Activated B cell treated with CpG ODN at 0.5 μM for 24 hours (primary cell): ENCODE measurements at regions of chr19 and their contacts with region 1.

Region 1: GRCh38 chr19:54463531-54464043 is at the start of gene LENG9:
- DNase-seq: peak; percentile 85
- ATAC-seq: peak; percentile 61
- H3K4me3 Mint-ChIP-seq: peak within 1 kb of the TSS; percentile 82
- H3K27ac Mint-ChIP-seq: peak within 1 kb of the TSS; percentile 90
- H3K4me1 Mint-ChIP-seq: peaks cover 28% of the 10 kb centered on the region
- H3K27me3 Mint-ChIP-seq: no peaks in the 10 kb centered on the region
- CTCF ChIP-seq: no peak
- total RNA-seq, gene LENG9: 6.3 and 8.5 TPM in 2 replicates

Region 2: GRCh38 chr19:53867225-53868090 is 596.1 kb before region 1 on chr19 and contains the start of gene MYADM:
- CTCF ChIA-PET with region 1: no interaction called
- POLR2A ChIA-PET with region 1: interaction called, 4 read pairs
- intact Hi-C with region 1: loop called (anchors 1 kb)
- DNase-seq: peak; percentile 99
- ATAC-seq: peak; percentile 65
- H3K4me3 Mint-ChIP-seq: peak within 1 kb of the TSS; percentile 91
- H3K27ac Mint-ChIP-seq: peak within 1 kb of the TSS; percentile 93
- H3K4me1 Mint-ChIP-seq: peaks cover 44% of the 10 kb centered on the region
- H3K27me3 Mint-ChIP-seq: no peaks in the 10 kb centered on the region
- CTCF ChIP-seq: no peak
- total RNA-seq, gene MYADM: 10.9 and 12.9 TPM in 2 replicates

Region 3: DNA sequence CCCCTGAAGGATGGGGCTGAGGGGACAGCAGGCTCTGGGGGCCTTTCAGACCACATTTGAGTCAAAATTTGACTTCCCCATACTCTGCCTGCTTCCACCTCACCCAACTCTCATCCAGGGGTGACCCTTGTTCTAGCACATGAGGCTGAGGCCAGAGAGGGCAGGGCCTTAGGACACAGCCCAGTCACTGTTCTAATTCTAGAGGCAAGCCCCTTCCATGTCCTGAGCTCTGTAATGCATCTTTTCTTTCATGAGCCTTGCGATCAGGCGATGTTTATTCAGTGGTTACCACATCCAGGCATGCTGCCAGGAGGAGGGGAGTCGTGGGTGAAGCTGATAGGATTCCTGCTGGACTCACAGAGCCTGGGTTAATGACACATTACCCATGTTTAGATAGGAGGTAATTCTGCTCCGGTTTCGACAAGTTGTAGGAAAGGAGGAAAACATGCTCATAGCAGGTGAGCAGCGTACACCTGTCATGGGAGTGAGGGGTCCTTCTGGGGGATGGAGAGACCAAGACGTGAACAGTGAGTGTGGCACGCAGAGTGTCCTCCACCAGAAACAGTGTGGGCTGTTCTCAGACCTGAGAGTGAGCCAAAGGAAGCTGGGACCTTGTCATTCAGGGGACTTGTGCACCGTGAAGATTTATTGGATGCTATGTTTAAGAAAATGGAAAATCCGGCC is 253.6 kb before region 1 on chr19:
- CTCF ChIA-PET with region 1: no interaction called
- POLR2A ChIA-PET with region 1: no interaction called
- intact Hi-C with region 1: no loop called
- DNase-seq: no peak
- ATAC-seq: no peak
- H3K4me3 Mint-ChIP-seq: peak overlapping the region; percentile 6
- H3K27ac Mint-ChIP-seq: peak overlapping the region; percentile 10
- H3K4me1 Mint-ChIP-seq: peaks cover 60% of the 10 kb centered on the region
- H3K27me3 Mint-ChIP-seq: no peaks in the 10 kb centered on the region
- CTCF ChIP-seq: no peak

Region 4: DNA sequence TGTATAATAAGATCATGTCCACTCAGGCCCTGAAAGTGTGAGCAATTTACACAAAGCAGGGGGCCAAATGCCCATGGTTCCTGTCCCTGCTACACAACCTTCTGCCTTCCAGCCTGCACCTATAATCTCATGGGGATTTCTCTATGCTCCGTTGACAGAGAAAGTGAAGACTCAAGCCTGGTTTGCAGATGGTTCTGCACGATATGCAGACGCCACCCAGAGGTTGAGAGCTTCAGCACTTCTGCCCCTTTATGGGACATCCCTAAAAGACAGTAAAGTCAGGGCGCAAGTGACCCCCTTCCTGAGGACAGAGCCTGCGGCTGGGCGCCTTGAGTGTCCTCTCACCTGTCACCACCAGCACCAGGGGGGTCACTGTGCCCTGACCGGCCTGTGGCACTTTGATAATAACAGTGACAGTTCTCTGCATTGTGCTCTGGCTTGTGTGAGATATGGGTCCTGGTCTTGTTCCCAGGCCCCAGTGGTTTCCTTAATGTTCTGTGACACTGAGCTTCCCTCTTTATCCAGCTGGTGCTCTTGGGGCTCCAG is 165.8 kb before region 1 on chr19:
- CTCF ChIA-PET with region 1: no interaction called
- POLR2A ChIA-PET with region 1: no interaction called
- intact Hi-C with region 1: no loop called
- DNase-seq: no peak
- ATAC-seq: peak; percentile 68
- H3K4me3 Mint-ChIP-seq: no peak overlapping the region
- H3K27ac Mint-ChIP-seq: no peak overlapping the region
- H3K4me1 Mint-ChIP-seq: peaks cover 11% of the 10 kb centered on the region
- H3K27me3 Mint-ChIP-seq: peaks cover 46% of the 10 kb centered on the region
- CTCF ChIP-seq: no peak

Region 5: GRCh38 chr19:54420383-54421168 is 43.0 kb before region 1 on chr19:
- CTCF ChIA-PET with region 1: no interaction called
- POLR2A ChIA-PET with region 1: no interaction called
- intact Hi-C with region 1: no loop called
- DNase-seq: no peak
- ATAC-seq: no peak
- H3K4me3 Mint-ChIP-seq: no peak overlapping the region
- H3K27ac Mint-ChIP-seq: no peak overlapping the region
- H3K4me1 Mint-ChIP-seq: peaks cover 11% of the 10 kb centered on the region
- H3K27me3 Mint-ChIP-seq: peaks cover 36% of the 10 kb centered on the region
- CTCF ChIP-seq: no peak

Region 6: DNA sequence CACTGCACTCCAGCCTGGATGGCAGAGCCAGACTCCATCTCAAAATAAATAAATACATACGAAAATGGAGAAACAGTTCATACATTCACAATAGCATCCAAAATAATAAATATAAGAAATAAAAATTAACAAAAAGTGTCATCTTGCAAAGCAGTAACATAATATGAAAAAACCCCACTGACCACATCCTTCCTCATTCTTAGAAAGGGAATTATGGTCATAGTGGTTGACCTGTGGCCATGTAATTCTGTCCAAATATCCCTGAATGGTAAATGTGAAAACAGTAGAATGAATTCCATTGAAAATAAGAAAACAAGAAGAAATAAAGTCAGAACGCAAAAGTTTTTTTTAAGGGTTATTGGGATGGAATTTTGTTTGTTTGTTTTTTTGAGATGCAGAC is 16.5 kb after region 1 on chr19:
- CTCF ChIA-PET with region 1: no interaction called
- POLR2A ChIA-PET with region 1: no interaction called
- intact Hi-C with region 1: no loop called
- DNase-seq: no peak
- ATAC-seq: no peak
- H3K4me3 Mint-ChIP-seq: no peak overlapping the region
- H3K27ac Mint-ChIP-seq: no peak overlapping the region
- H3K4me1 Mint-ChIP-seq: peaks cover 17% of the 10 kb centered on the region
- H3K27me3 Mint-ChIP-seq: peaks cover 28% of the 10 kb centered on the region
- CTCF ChIP-seq: no peak

Region 7: GRCh38 chr19:54616821-54617560 is 153.4 kb after region 1 on chr19:
- CTCF ChIA-PET with region 1: no interaction called
- POLR2A ChIA-PET with region 1: interaction called, 11 read pairs
- intact Hi-C with region 1: loop called (anchors 5 kb)
- DNase-seq: no peak
- ATAC-seq: peak; percentile 84
- H3K4me3 Mint-ChIP-seq: peak overlapping the region; percentile 99
- H3K27ac Mint-ChIP-seq: peak overlapping the region; percentile 99
- H3K4me1 Mint-ChIP-seq: peaks cover 80% of the 10 kb centered on the region
- H3K27me3 Mint-ChIP-seq: no peaks in the 10 kb centered on the region
- CTCF ChIP-seq: no peak

Region 8: GRCh38 chr19:54959840-54960239 is 496.3 kb after region 1 on chr19:
- CTCF ChIA-PET with region 1: no interaction called
- POLR2A ChIA-PET with region 1: no interaction called
- intact Hi-C with region 1: loop called (anchors 1 kb)
- DNase-seq: no peak
- ATAC-seq: peak; percentile 76
- H3K4me3 Mint-ChIP-seq: peak overlapping the region; percentile 74
- H3K27ac Mint-ChIP-seq: peak overlapping the region; percentile 82
- H3K4me1 Mint-ChIP-seq: peaks cover 25% of the 10 kb centered on the region
- H3K27me3 Mint-ChIP-seq: no peaks in the 10 kb centered on the region
- CTCF ChIP-seq: no peak

Region 9: DNA sequence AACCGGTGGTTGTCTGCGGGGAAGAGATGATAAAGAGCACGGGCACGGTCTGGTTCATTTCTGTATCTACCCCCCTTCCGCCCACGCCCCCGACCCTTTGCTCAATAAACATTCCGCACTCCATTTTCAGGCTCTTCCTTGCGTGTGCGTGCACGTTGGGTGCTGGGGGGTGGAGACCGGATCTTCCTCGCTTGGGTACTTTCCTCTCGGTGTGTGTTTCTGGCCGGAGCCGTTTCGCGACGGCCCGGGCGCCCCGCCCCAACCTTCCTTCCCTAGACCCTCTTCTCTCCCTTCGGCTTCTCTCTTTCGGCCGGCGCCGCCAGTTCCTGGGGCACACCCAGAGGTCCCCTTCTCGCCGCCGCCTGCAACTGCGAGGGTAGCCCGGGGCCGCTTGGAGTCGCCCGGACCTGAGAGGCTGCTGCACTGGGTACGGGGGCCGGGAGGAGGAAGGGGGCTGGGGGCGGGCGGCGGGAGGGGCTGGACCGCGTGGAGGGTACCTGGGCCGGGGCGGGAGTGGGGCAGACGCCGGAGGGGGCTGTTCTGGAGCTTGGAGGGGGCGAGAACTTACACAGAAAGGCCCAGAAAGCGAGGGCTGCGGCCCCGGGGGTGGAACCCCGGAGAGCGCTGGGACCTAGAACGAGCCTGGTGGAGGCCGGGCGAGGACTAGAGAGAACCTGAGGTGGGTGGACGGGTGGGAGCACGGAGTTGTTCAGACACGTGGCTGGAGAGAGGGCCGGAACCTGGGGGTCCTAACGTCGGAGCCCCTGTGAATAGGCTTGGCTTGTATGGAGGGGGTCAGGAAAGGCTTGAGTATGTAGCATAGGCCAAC is 1180.0 kb after region 1 on chr19 and contains the start of gene ZNF581:
- CTCF ChIA-PET with region 1: no interaction called
- POLR2A ChIA-PET with region 1: no interaction called
- intact Hi-C with region 1: loop called (anchors 10 kb)
- DNase-seq: peak; percentile 84
- ATAC-seq: peak; percentile 51
- H3K4me3 Mint-ChIP-seq: peak within 1 kb of the TSS; percentile 86
- H3K27ac Mint-ChIP-seq: peak within 1 kb of the TSS; percentile 96
- H3K4me1 Mint-ChIP-seq: peaks cover 66% of the 10 kb centered on the region
- H3K27me3 Mint-ChIP-seq: no peaks in the 10 kb centered on the region
- CTCF ChIP-seq: no peak
- total RNA-seq, gene ZNF581: 42.7 and 46.5 TPM in 2 replicates